Endothelial cell of umbilical vein (primary cell): ENCODE measurements at regions of chr1 and their contacts with region 1.

Region 1: GRCh38 chr1:25608488-25609178 is 8.0 kb upstream of the MAN1C1 start:
- DNase-seq: peak; percentile 64
- H3K4me3 ChIP-seq: no peak overlapping the region
- H3K27ac ChIP-seq: no peak overlapping the region
- H3K4me1 ChIP-seq: no peaks in the 10 kb centered on the region
- H3K27me3 ChIP-seq: peaks cover 26 to 37% of the 10 kb centered on the region in 2 experiments
- CTCF ChIP-seq: peak; percentile 48 to 72
- POLR2A ChIP-seq: no peak

Region 2: DNA sequence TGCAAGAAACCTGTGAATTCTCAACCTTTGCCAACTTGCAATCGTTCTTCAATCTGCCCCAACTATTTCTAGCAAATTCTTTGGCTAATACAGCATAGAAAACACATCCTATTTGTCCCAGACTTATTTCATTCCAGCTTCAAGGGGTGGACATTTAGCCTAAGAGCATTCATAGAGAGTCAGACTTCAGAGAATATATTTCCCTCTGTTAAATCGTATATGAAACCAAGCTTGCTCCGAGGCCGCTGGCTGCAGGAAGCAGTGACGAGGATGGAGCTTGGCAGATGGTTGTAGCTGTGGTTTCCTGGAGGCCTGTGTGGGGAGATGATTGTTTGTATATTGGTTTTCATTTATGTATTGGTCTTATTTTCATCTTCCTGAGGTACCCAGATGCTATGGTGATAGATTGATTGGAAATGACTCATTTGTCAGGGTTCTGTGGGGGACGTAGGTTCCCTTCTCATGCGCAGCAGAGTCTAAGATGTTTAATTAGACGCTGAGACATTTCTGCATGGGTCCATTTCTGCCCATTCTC is 34.0 kb after region 1 on chr1:
- CTCF ChIA-PET with region 1: interaction called, 10 read pairs
- POLR2A ChIA-PET with region 1: no interaction called
- dilution Hi-C with region 1: no loop called
- intact Hi-C with region 1: no loop called
- DNase-seq: peak; percentile 69
- H3K4me3 ChIP-seq: no peak overlapping the region
- H3K27ac ChIP-seq: no peak overlapping the region
- H3K4me1 ChIP-seq: peaks cover 6% of the 10 kb centered on the region
- H3K27me3 ChIP-seq: peaks cover 20 to 22% of the 10 kb centered on the region in 2 experiments
- CTCF ChIP-seq: no peak
- POLR2A ChIP-seq: no peak

Region 3: GRCh38 chr1:25810341-25811299 is 202.0 kb after region 1 on chr1:
- CTCF ChIA-PET with region 1: interaction called, 35 read pairs
- POLR2A ChIA-PET with region 1: no interaction called
- dilution Hi-C with region 1: no loop called
- intact Hi-C with region 1: loop called (anchors 1 kb)
- DNase-seq: peak; percentile 44
- H3K4me3 ChIP-seq: no peak overlapping the region
- H3K27ac ChIP-seq: no peak overlapping the region
- H3K4me1 ChIP-seq: peaks cover 10% of the 10 kb centered on the region
- H3K27me3 ChIP-seq: no peaks in the 10 kb centered on the region
- CTCF ChIP-seq: peak; percentile 78 to 95
- POLR2A ChIP-seq: no peak